ENCODE measurements at regions of chr2 and their contacts with region 1.

Region 1: DNA sequence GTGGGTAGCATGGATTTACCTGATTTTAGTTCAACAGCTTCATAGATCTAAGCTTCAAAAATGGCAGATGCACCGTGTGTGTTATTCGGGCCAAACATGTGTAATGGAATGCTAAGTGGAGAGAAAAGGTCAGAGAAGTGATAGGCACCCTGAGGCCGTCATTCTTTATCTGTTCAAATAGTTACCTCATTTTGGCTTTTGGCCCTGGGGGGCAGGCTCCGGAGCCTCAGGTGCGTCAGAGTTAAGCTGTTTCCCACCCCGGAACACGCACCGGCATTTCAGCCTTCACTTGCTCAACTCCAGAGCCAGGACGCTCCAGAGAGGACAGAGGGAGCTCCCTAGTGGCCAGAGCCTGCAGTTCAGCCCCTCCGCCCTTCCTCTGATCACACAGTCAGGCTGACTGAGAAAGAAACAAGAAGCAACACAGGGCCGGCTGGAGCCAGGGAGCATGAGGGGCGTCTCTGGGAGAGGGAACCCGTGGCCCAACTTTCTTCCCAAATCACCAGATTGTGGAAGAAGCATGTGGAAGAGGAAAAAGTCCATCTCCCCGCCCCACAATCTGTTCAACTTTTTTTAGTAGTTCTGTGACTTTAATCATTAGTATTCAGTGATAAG is 135.2 kb upstream of the EPC2 start:
- DNase-seq: peak; percentile 94
- H3K4me3 ChIP-seq: peak overlapping the region in 6 of 8 donors; percentile 4 to 61 (median 23)
- H3K27ac ChIP-seq: peak overlapping the region in 3 of 8 donors; percentile 5 to 34 (median 25)
- H3K4me1 ChIP-seq: peaks cover 0 to 15% (median 4%) of the 10 kb centered on the region in 6 donors
- H3K27me3 ChIP-seq: no peaks in the 10 kb centered on the region
- CTCF ChIP-seq: peak; percentile 74 to 95 (median 88)
- POLR2A ChIP-seq: no peak

Region 2: DNA sequence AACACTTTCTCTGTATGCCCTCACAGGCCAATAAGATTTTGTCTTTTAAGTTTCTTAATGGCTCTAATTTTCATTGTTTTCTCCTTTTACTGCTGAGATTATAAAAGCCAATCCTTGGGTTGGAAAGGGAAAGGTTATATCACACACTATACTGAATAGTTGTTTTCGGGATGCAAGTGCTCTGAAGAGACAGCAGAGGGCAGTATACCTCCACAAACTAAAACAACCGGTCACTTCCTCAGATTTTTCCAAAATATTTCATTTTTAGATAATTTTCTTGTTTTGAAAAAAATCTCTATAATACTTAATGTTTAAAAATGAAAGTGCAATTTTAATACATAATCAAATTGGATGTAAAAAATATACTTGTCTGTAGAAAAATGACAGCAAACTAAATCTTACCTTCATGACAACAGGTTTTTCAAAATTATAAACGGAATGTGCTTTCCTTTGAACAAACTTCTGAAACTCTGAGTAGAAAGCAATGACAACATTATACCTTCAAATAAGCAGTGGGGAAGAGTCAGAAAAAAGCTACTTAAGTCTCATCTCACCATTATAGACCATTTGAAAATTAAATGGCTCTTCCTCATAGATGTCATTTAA is 571.5 kb before region 1 on chr2:
- intact Hi-C with region 1: loop called (anchors 10 kb)
- DNase-seq: no peak
- H3K4me3 ChIP-seq: no peak overlapping the region
- H3K27ac ChIP-seq: no peak overlapping the region
- H3K4me1 ChIP-seq: no peaks in the 10 kb centered on the region
- H3K27me3 ChIP-seq: no peaks in the 10 kb centered on the region
- CTCF ChIP-seq: peak; percentile 51 to 89 (median 79)
- POLR2A ChIP-seq: no peak

Region 3: DNA sequence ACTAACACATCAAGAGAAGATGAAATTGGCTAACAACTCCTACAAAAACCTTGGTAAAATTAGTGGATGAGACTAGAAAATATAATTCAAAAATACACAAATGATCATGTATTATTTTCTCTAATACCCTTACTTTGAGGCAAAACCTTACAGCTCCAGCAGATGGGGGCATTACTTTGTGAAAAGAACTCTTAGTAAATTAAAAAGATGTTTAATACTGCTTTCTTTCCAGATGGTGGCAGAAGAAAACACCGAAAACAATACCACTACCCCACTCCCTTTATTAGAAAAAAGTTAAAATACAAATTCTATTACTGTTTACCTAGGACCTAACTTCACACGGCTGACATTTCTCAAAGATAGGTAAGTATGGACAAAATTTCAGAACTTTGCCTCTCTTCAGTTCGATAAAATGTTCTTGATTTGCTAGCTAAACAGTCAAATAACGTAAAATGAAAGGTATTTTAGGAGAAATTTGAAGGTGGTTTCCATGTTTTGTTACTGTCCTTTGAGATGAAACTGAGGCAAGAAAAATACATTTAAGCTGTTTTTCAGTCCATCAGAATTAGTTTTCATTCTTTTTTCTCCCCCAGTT is 519.5 kb before region 1 on chr2:
- intact Hi-C with region 1: loop called (anchors 5 kb)
- DNase-seq: no peak
- H3K4me3 ChIP-seq: no peak overlapping the region
- H3K27ac ChIP-seq: no peak overlapping the region
- H3K4me1 ChIP-seq: peaks cover 0 to 36% (median 0%) of the 10 kb centered on the region in 6 donors
- H3K27me3 ChIP-seq: no peaks in the 10 kb centered on the region
- CTCF ChIP-seq: peak; percentile 26 to 70 (median 50)
- POLR2A ChIP-seq: no peak

Region 4: DNA sequence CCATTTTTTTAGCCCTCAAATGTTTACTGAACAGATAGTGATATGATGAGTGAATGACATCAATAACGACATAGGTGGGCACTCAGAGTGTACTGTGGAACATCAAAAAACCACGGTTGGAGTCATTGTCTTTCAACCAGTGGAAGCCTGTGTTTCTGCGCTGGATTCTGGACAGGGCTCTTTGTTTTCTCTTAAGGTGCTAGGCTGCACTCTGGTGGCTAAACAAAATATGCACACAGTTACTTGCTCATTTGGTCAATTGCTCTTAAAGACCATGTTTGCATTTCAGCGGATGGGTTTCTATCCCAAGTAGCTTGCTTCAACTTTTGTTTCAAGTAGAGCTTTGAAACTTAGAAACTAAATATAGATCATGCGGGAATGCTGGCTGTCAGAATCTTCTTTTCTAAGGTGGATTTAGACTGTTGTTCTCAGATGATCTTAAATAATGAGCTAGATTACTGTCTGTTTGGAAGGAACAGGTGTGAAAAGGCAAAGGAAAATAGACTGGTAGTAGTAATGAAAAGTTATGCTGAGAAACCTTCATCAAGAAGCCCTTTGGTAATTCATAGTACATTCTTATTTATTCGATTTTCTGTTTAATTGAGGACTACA is 480.6 kb after region 1 on chr2:
- intact Hi-C with region 1: loop called (anchors 10 kb)
- DNase-seq: no peak
- H3K4me3 ChIP-seq: no peak overlapping the region
- H3K27ac ChIP-seq: no peak overlapping the region
- H3K4me1 ChIP-seq: peaks cover 0 to 6% (median 0%) of the 10 kb centered on the region in 6 donors
- H3K27me3 ChIP-seq: no peaks in the 10 kb centered on the region
- CTCF ChIP-seq: peak; percentile 33 to 72 (median 62)
- POLR2A ChIP-seq: no peak

Region 5: GRCh38 chr2:149278161-149278871 is 768.9 kb after region 1 on chr2:
- intact Hi-C with region 1: no loop called
- DNase-seq: no peak
- H3K4me3 ChIP-seq: no peak overlapping the region
- H3K27ac ChIP-seq: no peak overlapping the region
- H3K4me1 ChIP-seq: no peaks in the 10 kb centered on the region
- H3K27me3 ChIP-seq: no peaks in the 10 kb centered on the region
- CTCF ChIP-seq: no peak
- POLR2A ChIP-seq: no peak